Heart left ventricle (tissue), 16 donors: ENCODE measurements at regions of chr5 and their contacts with region 1.

Region 1: DNA sequence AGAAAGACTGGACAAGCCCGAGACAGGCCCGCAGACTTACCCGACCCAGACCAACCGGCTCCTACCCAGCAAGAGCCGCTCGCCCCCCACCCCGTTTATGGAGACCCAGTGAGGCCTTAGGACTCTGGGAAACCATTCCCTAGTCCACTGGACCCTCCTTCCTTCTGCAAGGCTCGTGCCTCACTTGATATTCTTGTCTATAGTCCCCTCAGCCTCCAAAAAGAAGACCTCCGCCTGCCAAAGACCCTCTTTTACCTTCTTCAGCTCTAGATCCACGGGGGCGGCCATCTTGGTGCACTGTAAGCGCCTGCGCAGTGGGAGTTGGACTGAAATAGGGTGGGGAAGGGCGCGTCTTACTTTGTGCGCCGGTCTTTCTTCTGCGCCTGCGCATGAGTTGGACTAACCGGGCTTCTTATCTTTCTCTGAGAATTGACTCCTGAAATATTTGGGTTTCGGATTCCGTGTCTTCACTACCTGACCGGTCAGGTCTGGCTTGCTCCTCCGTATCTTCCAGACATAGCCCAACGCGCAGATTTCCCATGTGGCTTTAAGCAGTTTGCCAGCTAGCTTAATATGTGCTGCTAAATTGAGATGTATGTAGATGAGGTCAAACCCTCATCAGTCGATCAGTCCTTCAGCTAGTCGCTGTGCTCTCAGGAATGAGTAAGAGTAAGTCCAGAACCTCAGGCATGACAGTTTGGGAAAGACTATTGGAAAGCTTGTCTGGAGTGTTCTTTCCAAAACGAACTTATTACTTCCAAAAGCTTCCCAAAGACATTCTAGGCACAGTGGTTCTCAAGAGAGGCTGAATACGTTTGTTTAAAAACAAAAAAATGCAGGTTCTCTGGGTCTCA is at the start of gene PFDN1:
- DNase-seq: peak; percentile 93 to 97 (median 95)
- ATAC-seq: peak; percentile 98 to 99 (median 99)
- H3K4me3 ChIP-seq: peak within 1 kb of the TSS; percentile 57 to 97 (median 80)
- H3K27ac ChIP-seq: peak within 1 kb of the TSS; percentile 51 to 94 (median 87)
- H3K4me1 ChIP-seq: peaks cover 3 to 39% (median 26%) of the 10 kb centered on the region in 12 donors
- H3K27me3 ChIP-seq: no peaks in the 10 kb centered on the region
- CTCF ChIP-seq: no peak
- POLR2A ChIP-seq: no peak
- total RNA-seq, gene PFDN1: 53.8 to 130 (median 72.3) TPM

Region 2: DNA sequence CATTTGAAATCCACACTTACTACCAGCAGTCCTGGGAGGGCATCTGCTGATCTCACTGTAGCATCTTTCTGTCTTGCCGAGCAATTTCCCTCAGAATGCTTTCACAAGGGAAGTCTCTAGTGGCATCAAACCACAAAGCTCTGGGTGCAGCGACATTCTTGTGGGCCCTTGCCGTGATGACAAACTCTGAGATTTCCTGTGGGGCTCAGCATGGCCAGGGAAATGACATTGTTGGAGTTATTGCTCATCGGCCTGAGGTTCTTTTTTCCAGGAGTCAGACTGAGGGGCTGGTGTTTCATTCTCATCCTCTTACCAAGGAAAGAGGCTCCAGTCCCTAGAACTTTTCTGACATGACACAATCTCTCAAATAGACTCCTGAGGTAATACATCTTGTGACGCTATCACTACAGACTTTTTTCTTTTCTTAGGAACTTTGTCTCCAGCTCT is 51.5 kb before region 1 on chr5:
- intact Hi-C with region 1: loop called in 3 of 10 experiments (anchors 5 to 10 kb)
- DNase-seq: peak in 1 of 5 donors; percentile 41
- ATAC-seq: peak in 3 of 4 donors; percentile 35 to 62 (median 38)
- H3K4me3 ChIP-seq: no peak overlapping the region
- H3K27ac ChIP-seq: peak overlapping the region in 8 of 12 donors; percentile 1 to 76 (median 28)
- H3K4me1 ChIP-seq: peaks cover 4 to 85% (median 60%) of the 10 kb centered on the region in 12 donors
- H3K27me3 ChIP-seq: no peaks in the 10 kb centered on the region
- CTCF ChIP-seq: no peak
- POLR2A ChIP-seq: no peak

Region 3: GRCh38 chr5:140267559-140268018 is 35.4 kb before region 1 on chr5:
- intact Hi-C with region 1: loop called in 4 of 10 experiments (anchors 5 kb)
- DNase-seq: no peak
- ATAC-seq: peak; percentile 50 to 87 (median 76)
- H3K4me3 ChIP-seq: peak overlapping the region in 7 of 12 donors; percentile 10 to 35 (median 24)
- H3K27ac ChIP-seq: peak overlapping the region; percentile 47 to 92 (median 79)
- H3K4me1 ChIP-seq: peaks cover 6 to 60% (median 32%) of the 10 kb centered on the region in 12 donors
- H3K27me3 ChIP-seq: no peaks in the 10 kb centered on the region
- CTCF ChIP-seq: no peak
- POLR2A ChIP-seq: no peak

Region 4: DNA sequence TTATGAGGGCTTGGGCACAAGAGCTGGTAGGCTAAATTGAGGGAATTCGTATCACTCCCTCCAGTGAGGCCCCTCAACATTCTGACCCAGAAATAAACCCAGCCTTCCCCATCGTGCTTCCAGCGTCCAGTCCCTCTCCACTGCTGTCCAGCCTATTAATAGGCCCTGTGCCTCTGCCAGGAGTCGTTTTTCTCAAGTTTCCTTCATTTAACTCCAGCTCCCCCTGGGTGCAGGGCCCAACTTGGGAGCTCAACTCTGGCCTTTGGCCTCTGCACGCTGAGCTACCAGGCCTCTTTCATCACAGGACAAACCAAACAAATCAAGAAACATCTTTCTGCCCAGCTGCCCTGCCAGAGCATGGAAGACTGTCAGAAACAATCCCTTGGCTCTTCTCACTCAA is 33.4 kb after region 1 on chr5:
- intact Hi-C with region 1: loop called in 3 of 10 experiments (anchors 5 kb)
- DNase-seq: peak in 4 of 5 donors; percentile 48 to 68 (median 51)
- ATAC-seq: peak; percentile 46 to 57 (median 55)
- H3K4me3 ChIP-seq: no peak overlapping the region
- H3K27ac ChIP-seq: peak overlapping the region; percentile 16 to 79 (median 70)
- H3K4me1 ChIP-seq: peaks cover 3 to 71% (median 53%) of the 10 kb centered on the region in 12 donors
- H3K27me3 ChIP-seq: no peaks in the 10 kb centered on the region
- CTCF ChIP-seq: peak in 1 of 12 donors; percentile 33
- POLR2A ChIP-seq: no peak